CD4-positive, alpha-beta memory T cell (primary cell): ENCODE measurements at regions of chr3 and their contacts with region 1.

Region 1: DNA sequence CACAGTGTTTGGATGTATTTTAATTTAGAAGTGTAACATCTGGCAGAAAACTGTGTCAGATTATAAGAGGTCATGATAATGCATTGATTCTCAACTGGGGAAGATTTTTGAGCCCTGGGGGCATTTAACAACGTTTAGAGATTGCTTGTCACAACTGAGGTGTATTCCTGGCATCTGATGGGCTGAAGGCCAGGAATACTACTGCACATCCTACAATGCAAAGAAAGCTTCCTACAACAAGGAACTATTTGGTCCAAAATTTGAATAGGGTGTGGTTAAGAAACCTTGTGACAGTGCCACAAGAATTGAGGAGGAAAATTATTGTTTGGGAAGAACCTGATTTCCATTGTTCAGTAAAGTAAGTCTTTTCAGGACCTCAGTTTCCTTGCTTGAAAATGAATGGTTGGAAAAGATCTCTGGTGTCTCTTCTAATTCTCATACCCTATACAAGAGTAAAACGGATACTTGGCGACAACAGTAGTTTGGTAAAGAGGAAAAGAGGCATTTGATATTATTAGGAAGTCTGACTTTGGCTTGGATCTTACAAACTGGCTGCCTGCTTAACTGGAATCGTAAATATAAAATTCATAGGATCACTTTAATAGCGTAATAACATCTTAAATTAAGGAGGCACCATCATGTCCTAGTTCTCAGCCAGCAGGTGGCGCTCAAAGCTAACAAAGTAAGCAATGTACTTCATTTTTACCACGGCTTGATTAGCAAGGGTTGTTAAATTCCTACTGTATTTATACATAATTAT is 4.3 kb downstream of the DAZL start:
- DNase-seq: peak; percentile 72 to 76 (median 72)
- H3K4me3 ChIP-seq: no peak overlapping the region
- H3K4me3 Mint-ChIP-seq: no peak overlapping the region
- H3K27ac ChIP-seq: no peak overlapping the region
- H3K27ac Mint-ChIP-seq: peak overlapping the region in 1 of 7 donors; percentile 36
- H3K4me1 ChIP-seq: peaks cover 10% of the 10 kb centered on the region
- H3K4me1 Mint-ChIP-seq: peaks cover 3 to 13% (median 8%) of the 10 kb centered on the region in 4 donors
- H3K27me3 ChIP-seq: no peaks in the 10 kb centered on the region
- H3K27me3 Mint-ChIP-seq: peaks cover 0 to 2% of the 10 kb centered on the region in 2 donors

Region 2: DNA sequence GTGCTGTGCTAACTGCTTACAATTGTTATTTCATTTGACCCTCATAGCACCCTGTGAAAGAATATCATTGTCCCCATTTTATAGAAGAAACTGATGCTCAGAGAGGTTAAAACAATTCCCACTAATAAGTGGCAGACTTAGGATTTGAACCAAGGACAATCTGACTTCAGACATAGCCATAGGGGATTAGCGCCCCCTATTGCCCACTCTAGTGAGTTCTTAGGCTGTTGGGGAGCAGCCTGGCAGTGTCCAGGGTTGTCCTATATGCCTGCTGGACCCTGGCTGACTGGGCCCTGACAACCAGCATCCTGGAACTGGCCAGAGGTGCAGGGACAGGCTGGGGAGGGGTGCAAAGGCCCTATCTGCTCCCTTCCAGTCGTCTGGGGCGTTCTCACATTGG is 351.6 kb before region 1 on chr3:
- CTCF ChIA-PET with region 1: no interaction called
- POLR2A ChIA-PET with region 1: no interaction called
- intact Hi-C with region 1: no loop called
- DNase-seq: no peak
- H3K4me3 ChIP-seq: no peak overlapping the region
- H3K4me3 Mint-ChIP-seq: no peak overlapping the region
- H3K27ac ChIP-seq: no peak overlapping the region
- H3K27ac Mint-ChIP-seq: no peak overlapping the region
- H3K4me1 ChIP-seq: peaks cover 3% of the 10 kb centered on the region
- H3K4me1 Mint-ChIP-seq: peaks cover 4 to 17% (median 9%) of the 10 kb centered on the region in 4 donors
- H3K27me3 ChIP-seq: no peaks in the 10 kb centered on the region
- H3K27me3 Mint-ChIP-seq: no peaks in the 10 kb centered on the region

Region 3: DNA sequence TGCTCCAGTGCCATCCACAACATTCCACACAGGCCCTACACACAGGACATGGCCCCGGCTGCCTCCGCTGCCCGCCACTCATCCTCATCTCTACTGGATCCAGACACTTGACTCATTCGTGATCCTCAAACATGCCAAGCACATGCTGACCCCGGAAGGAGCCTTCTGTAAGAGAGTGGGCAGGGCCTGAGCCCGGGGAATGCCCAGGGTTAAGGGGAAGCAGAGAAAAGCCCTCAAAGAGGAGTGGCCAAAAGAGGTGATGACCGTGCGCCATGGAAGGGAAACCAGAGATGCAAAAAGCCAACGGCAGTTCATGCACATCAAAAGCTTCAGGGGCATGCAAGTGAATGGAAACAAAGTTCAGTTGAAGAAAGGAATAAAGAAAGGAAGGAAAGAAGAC is 133.6 kb before region 1 on chr3:
- CTCF ChIA-PET with region 1: no interaction called
- POLR2A ChIA-PET with region 1: no interaction called
- intact Hi-C with region 1: no loop called
- DNase-seq: peak in 4 of 5 donors; percentile 16 to 76 (median 34)
- H3K4me3 ChIP-seq: no peak overlapping the region
- H3K4me3 Mint-ChIP-seq: peak overlapping the region in 7 of 8 donors; percentile 26 to 84 (median 71)
- H3K27ac ChIP-seq: no peak overlapping the region
- H3K27ac Mint-ChIP-seq: peak overlapping the region; percentile 73 to 98 (median 94)
- H3K4me1 ChIP-seq: peaks cover 43% of the 10 kb centered on the region
- H3K4me1 Mint-ChIP-seq: peaks cover 43 to 66% (median 57%) of the 10 kb centered on the region in 4 donors
- H3K27me3 ChIP-seq: no peaks in the 10 kb centered on the region
- H3K27me3 Mint-ChIP-seq: no peaks in the 10 kb centered on the region

Region 4: DNA sequence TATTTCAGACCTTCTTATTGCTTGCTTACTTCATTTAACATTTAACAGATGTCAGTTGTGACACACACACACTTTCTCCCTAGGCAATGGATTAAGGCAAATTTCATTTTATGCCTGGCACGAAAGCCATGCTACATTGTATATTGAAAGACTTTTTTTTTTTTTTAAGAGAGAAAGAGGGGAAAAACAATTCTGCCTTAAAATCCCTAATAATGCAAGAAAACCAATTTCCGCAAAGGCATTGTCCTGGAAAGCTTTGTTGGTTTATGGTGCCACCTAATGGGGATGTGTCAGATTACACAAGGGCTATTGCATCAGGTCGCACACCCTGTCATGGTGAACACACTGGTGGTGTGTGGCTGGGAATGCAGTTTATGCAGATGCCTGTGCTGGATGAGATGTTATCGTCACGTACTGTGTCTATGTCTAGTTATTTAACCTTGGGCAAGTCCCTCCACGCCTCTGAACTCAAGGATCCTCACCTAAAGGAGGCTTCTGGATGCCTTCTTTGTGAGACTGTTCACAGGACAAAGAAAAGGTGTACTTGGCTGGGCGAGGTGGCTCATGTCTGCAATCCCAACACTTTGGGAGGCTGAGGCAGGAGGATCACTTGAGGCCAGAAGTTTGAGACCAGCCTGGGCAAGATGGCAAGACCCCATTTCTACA is 50.2 kb before region 1 on chr3:
- CTCF ChIA-PET with region 1: no interaction called
- POLR2A ChIA-PET with region 1: no interaction called
- intact Hi-C with region 1: no loop called
- DNase-seq: peak; percentile 74 to 80 (median 78)
- H3K4me3 ChIP-seq: no peak overlapping the region
- H3K4me3 Mint-ChIP-seq: no peak overlapping the region
- H3K27ac ChIP-seq: no peak overlapping the region
- H3K27ac Mint-ChIP-seq: peak overlapping the region in 5 of 7 donors; percentile 11 to 84 (median 51)
- H3K4me1 ChIP-seq: no peaks in the 10 kb centered on the region
- H3K4me1 Mint-ChIP-seq: peaks cover 2 to 6% (median 3%) of the 10 kb centered on the region in 4 donors
- H3K27me3 ChIP-seq: no peaks in the 10 kb centered on the region
- H3K27me3 Mint-ChIP-seq: peaks cover 6 to 14% of the 10 kb centered on the region in 2 donors

Region 5: GRCh38 chr3:16639806-16640205 is 38.8 kb after region 1 on chr3:
- CTCF ChIA-PET with region 1: no interaction called
- POLR2A ChIA-PET with region 1: no interaction called
- intact Hi-C with region 1: no loop called
- DNase-seq: no peak
- H3K4me3 ChIP-seq: no peak overlapping the region
- H3K4me3 Mint-ChIP-seq: no peak overlapping the region
- H3K27ac ChIP-seq: no peak overlapping the region
- H3K27ac Mint-ChIP-seq: no peak overlapping the region
- H3K4me1 ChIP-seq: no peaks in the 10 kb centered on the region
- H3K4me1 Mint-ChIP-seq: no peaks in the 10 kb centered on the region
- H3K27me3 ChIP-seq: no peaks in the 10 kb centered on the region
- H3K27me3 Mint-ChIP-seq: peaks cover 0 to 4% of the 10 kb centered on the region in 2 donors

Region 6: GRCh38 chr3:16834212-16834611 is 233.3 kb after region 1 on chr3:
- CTCF ChIA-PET with region 1: interaction called, 4 read pairs
- POLR2A ChIA-PET with region 1: no interaction called
- intact Hi-C with region 1: loop called (anchors 5 kb)
- DNase-seq: no peak
- H3K4me3 ChIP-seq: no peak overlapping the region
- H3K4me3 Mint-ChIP-seq: no peak overlapping the region
- H3K27ac ChIP-seq: no peak overlapping the region
- H3K27ac Mint-ChIP-seq: no peak overlapping the region
- H3K4me1 ChIP-seq: peaks cover 19% of the 10 kb centered on the region
- H3K4me1 Mint-ChIP-seq: peaks cover 20 to 29% (median 24%) of the 10 kb centered on the region in 4 donors
- H3K27me3 ChIP-seq: no peaks in the 10 kb centered on the region
- H3K27me3 Mint-ChIP-seq: no peaks in the 10 kb centered on the region

Region 7: DNA sequence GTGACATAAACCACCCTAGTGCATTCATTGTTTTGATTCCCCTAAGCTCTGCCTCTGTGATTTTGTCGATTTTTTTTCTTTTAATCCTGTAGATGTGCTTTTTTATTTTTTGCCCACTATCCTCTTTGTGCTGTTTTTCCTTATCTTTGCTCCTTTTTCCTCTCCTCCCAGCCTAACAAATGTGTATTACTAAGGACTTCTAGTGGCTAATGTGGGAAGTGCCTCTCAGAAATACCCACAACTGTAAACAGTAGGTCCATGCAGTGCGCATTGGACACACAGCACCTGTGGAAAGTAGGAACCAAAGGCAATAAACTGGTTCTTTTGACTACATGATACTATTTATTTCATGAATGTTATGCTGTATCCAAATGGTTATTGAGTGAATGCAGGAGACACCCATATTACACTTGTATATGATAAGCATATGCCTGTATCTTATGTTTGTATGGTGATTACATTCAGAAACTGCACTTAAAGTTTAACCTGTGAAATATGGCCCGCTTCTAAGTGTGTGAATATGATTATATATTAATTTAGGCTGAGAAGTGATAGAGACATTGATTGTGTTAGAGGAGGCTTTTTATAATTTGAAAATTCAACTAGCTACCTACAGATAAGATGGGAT is 431.6 kb after region 1 on chr3:
- CTCF ChIA-PET with region 1: no interaction called
- POLR2A ChIA-PET with region 1: no interaction called
- intact Hi-C with region 1: loop called (anchors 10 kb)
- DNase-seq: no peak
- H3K4me3 ChIP-seq: no peak overlapping the region
- H3K4me3 Mint-ChIP-seq: no peak overlapping the region
- H3K27ac ChIP-seq: no peak overlapping the region
- H3K27ac Mint-ChIP-seq: peak overlapping the region in 2 of 7 donors; percentile 5 to 28
- H3K4me1 ChIP-seq: peaks cover 35% of the 10 kb centered on the region
- H3K4me1 Mint-ChIP-seq: peaks cover 46 to 84% (median 68%) of the 10 kb centered on the region in 4 donors
- H3K27me3 ChIP-seq: no peaks in the 10 kb centered on the region
- H3K27me3 Mint-ChIP-seq: no peaks in the 10 kb centered on the region

Region 8: DNA sequence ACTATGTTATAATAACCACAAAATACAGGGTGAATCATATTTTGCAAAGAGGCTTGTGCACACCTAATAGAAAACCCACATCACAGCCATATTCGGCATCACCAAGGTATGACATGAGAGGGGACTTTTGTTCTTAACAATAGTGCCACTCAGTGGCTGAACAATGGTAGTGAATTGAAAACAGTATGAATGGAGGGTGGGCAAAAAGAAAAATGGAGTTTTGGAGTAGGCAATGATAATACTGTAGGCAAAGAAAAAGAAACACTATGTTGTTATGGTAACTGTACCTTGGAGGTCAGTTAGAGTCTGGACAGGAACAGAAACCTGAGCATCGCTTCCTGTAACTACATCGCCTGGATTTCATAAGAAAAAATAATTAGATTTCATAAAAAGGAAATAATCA is 632.4 kb after region 1 on chr3:
- CTCF ChIA-PET with region 1: interaction called, 77 read pairs
- POLR2A ChIA-PET with region 1: interaction called, 3 read pairs
- intact Hi-C with region 1: loop called (anchors 1 kb)
- DNase-seq: peak; percentile 56 to 69 (median 66)
- H3K4me3 ChIP-seq: no peak overlapping the region
- H3K4me3 Mint-ChIP-seq: peak overlapping the region in 2 of 8 donors; percentile 0
- H3K27ac ChIP-seq: no peak overlapping the region
- H3K27ac Mint-ChIP-seq: peak overlapping the region in 4 of 7 donors; percentile 1 to 84 (median 36)
- H3K4me1 ChIP-seq: peaks cover 18% of the 10 kb centered on the region
- H3K4me1 Mint-ChIP-seq: peaks cover 17 to 28% (median 25%) of the 10 kb centered on the region in 4 donors
- H3K27me3 ChIP-seq: no peaks in the 10 kb centered on the region
- H3K27me3 Mint-ChIP-seq: no peaks in the 10 kb centered on the region

Region 9: GRCh38 chr3:17258823-17259436 is 658.0 kb after region 1 on chr3:
- CTCF ChIA-PET with region 1: interaction called, 4 read pairs
- POLR2A ChIA-PET with region 1: no interaction called
- intact Hi-C with region 1: loop called (anchors 1 kb)
- DNase-seq: peak in 4 of 5 donors; percentile 31 to 45 (median 39)
- H3K4me3 ChIP-seq: no peak overlapping the region
- H3K4me3 Mint-ChIP-seq: no peak overlapping the region
- H3K27ac ChIP-seq: no peak overlapping the region
- H3K27ac Mint-ChIP-seq: no peak overlapping the region
- H3K4me1 ChIP-seq: no peaks in the 10 kb centered on the region
- H3K4me1 Mint-ChIP-seq: peaks cover 0 to 1% (median 0%) of the 10 kb centered on the region in 4 donors
- H3K27me3 ChIP-seq: no peaks in the 10 kb centered on the region
- H3K27me3 Mint-ChIP-seq: no peaks in the 10 kb centered on the region

Region 10: GRCh38 chr3:17412950-17413530 is 812.1 kb after region 1 on chr3:
- CTCF ChIA-PET with region 1: interaction called, 36 read pairs
- POLR2A ChIA-PET with region 1: no interaction called
- intact Hi-C with region 1: loop called (anchors 1 kb)
- DNase-seq: peak in 4 of 5 donors; percentile 44 to 53 (median 49)
- H3K4me3 ChIP-seq: no peak overlapping the region
- H3K4me3 Mint-ChIP-seq: no peak overlapping the region
- H3K27ac ChIP-seq: no peak overlapping the region
- H3K27ac Mint-ChIP-seq: peak overlapping the region in 1 of 7 donors; percentile 31
- H3K4me1 ChIP-seq: no peaks in the 10 kb centered on the region
- H3K4me1 Mint-ChIP-seq: peaks cover 0 to 8% (median 2%) of the 10 kb centered on the region in 4 donors
- H3K27me3 ChIP-seq: no peaks in the 10 kb centered on the region
- H3K27me3 Mint-ChIP-seq: no peaks in the 10 kb centered on the region